ENCODE measurements at regions of chr5 and their contacts with region 1.

Region 1: GRCh38 chr5:157265714-157266285 is at the start of gene CYFIP2:
- DNase-seq: peak; percentile 96
- H3K4me3 Mint-ChIP-seq: peak within 1 kb of the TSS; percentile 96
- H3K27ac Mint-ChIP-seq: peak within 1 kb of the TSS; percentile 98
- H3K4me1 Mint-ChIP-seq: peaks cover 68% of the 10 kb centered on the region
- H3K27me3 Mint-ChIP-seq: no peaks in the 10 kb centered on the region
- total RNA-seq, gene CYFIP2: 180 and 193 TPM in 2 replicates

Region 2: DNA sequence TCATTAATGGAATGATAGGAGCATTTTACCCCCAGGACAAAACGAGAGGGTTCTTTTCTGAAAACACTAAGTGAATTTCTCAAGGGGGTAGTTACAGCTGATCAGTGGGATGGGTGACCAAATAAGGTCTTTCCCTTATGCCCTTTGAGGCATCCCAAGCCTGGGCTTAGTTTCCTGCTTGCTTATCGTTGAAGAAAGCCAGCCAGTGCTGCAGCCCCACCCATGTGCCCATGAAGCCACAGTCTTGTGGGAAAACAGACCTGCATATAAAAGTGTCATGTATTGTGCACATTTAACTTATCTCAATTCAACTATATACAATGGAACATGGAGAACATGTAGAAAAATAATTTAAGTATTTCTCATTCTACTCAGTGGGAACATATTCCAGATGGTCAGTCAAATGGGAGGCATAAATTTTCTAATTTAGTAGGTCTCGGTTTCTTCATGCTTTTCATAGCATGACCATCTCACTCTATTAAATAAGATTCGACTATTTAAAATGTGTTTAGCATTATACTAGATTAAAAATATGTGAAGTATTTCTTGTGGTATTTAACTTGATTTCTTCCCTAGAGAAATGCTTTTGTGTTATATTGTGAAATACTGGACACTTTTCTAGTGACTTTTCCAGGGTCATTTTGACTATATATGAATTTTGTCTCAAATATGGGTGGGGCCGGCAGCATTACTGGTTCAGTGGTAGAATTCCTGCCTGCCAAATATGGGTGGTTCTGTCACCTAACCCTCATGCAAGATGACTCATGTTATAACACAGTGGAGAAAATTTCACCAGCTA is 1128.5 kb before region 1 on chr5:
- intact Hi-C with region 1: no loop called
- DNase-seq: peak; percentile 17
- H3K4me3 Mint-ChIP-seq: no peak overlapping the region
- H3K27ac Mint-ChIP-seq: no peak overlapping the region
- H3K4me1 Mint-ChIP-seq: no peaks in the 10 kb centered on the region
- H3K27me3 Mint-ChIP-seq: no peaks in the 10 kb centered on the region

Region 3: DNA sequence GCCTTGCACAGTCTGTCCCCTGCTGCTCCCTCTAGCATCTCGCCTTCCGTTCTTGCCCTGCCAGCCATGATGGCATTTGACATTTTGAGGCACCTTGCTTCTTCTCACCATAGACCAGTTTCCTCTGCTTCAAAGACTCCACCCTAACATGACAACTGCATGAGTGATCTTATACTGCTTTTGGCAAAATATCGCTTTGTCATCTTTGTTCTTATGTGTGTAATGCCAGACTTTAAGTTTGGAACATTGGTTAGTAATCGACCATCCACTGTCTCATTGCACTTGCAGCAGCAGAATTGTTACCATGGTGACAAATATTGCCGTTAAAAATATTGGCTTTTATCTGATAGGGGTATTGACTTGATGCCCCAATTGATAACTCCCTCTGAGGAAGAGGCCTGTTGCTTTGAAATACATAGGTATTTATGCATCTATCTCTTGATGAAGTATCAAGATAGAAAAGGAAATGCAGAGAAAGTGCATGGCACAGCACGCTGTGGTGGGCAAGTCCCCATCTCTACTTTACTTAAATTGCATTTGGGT is 106.5 kb before region 1 on chr5:
- intact Hi-C with region 1: no loop called
- DNase-seq: peak; percentile 74
- H3K4me3 Mint-ChIP-seq: peak overlapping the region; percentile 4
- H3K27ac Mint-ChIP-seq: peak overlapping the region; percentile 87
- H3K4me1 Mint-ChIP-seq: peaks cover 57% of the 10 kb centered on the region
- H3K27me3 Mint-ChIP-seq: no peaks in the 10 kb centered on the region

Region 4: DNA sequence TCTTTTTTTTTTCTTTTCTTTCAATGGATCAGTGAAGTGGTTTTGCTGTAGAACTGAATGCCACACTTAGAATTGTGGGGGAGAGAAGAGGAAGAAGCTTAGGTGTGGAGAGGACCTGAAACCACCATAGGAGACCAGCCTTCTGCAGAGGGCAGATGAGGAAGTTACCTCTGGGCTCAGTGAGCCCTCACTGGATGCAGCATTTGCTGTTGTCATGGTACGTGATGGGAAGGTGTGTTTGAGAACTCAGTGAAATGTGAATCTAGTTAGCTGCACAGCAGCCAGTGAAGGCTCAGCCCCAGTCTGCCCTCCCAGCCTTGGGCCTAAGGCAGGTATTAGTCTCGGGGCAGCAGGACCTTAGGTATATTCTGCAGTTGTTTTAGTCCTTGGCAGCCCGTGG is 17.6 kb after region 1 on chr5:
- intact Hi-C with region 1: loop called (anchors 2 kb)
- DNase-seq: peak; percentile 80
- H3K4me3 Mint-ChIP-seq: peak overlapping the region; percentile 61
- H3K27ac Mint-ChIP-seq: peak overlapping the region; percentile 81
- H3K4me1 Mint-ChIP-seq: peaks cover 70% of the 10 kb centered on the region
- H3K27me3 Mint-ChIP-seq: no peaks in the 10 kb centered on the region

Region 5: GRCh38 chr5:157312492-157312891 is 46.7 kb after region 1 on chr5:
- intact Hi-C with region 1: loop called (anchors 2 kb)
- DNase-seq: peak; percentile 87
- H3K4me3 Mint-ChIP-seq: no peak overlapping the region
- H3K27ac Mint-ChIP-seq: peak overlapping the region; percentile 86
- H3K4me1 Mint-ChIP-seq: peaks cover 22% of the 10 kb centered on the region
- H3K27me3 Mint-ChIP-seq: no peaks in the 10 kb centered on the region

Region 6: DNA sequence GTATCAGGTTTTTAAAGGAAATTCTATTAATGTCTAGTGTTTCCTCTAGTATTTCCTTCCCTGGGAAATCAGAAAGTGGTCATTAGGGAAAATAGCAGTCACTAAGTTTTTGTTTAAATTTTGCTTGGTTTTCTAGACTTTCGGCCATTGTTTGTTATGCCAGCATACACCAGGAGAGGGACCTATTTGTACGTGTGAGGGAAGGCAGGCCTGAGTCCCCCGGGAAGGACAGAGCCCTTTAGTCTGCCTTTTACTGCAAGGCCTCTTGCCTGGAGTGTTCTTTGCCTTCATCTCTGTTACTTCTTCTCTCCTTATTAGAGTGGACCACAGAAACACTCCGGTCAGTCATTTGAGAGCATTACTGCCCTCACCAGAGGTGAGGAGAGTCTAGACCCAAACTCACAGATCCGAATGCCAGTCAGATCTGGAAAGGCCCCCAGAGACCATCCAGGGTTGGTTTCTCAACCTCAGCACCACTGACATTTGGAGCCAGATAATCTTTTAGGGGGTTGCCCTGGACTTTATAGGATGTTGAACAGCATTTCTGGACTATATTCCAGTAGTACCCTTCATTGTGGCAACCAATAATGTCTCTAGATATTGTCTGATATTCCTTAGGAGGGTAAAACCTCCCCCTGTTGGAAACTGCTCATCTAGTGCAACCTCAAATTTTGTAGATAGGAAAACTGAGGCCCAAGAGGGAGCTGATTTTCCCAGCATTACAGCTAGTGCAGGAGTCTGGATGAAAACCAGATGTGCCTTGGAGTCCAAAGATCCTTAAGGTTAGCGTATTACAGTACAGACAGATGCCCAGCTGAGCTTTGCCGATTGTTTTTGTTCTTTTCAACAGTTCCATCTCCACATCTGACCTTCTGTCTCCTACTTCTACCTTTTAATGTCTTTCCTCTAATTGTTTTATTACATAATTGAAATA is 101.2 kb after region 1 on chr5:
- intact Hi-C with region 1: no loop called
- DNase-seq: no peak
- H3K4me3 Mint-ChIP-seq: no peak overlapping the region
- H3K27ac Mint-ChIP-seq: peak overlapping the region; percentile 57
- H3K4me1 Mint-ChIP-seq: peaks cover 7% of the 10 kb centered on the region
- H3K27me3 Mint-ChIP-seq: no peaks in the 10 kb centered on the region

Region 7: DNA sequence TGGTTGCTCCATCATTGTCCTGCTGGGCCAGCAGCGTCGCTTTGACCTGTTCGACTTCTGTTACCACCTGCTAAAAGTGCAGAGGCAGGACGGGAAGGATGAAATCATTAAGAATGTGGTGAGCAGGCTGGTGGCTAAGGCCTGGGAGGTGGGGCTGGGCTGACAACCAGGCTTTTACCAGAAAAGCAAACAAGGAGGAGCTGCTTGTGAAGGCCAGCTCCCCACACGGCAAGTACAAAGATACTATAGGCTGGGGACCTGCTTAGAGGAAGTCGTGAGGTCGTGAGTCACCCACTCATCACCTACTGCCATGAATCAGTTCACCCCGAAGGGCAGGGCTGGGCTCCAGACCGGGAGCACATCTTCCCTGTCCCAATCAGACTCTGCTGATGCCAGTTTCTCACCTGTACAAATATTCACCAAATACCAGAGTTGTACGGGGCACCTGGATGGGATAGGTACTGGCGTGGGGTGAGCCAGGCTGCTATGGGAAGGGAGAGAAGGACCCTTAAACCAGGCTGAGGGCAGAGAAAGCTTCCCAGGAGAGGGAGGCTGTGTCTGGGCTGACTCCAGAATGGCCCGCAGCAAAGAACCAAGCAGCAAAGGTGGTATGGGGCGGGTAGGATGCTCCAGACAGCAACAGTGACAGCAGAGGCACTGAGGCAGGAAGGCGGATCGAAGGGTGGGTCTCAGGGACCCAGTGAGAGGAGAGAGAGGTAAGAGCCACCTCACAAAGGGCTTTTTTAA is 124.9 kb after region 1 on chr5:
- intact Hi-C with region 1: no loop called
- DNase-seq: peak; percentile 82
- H3K4me3 Mint-ChIP-seq: peak overlapping the region; percentile 58
- H3K27ac Mint-ChIP-seq: peak overlapping the region; percentile 95
- H3K4me1 Mint-ChIP-seq: peaks cover 24% of the 10 kb centered on the region
- H3K27me3 Mint-ChIP-seq: no peaks in the 10 kb centered on the region